ENCODE measurements at regions of chr2 and their contacts with region 1.

Region 1: DNA sequence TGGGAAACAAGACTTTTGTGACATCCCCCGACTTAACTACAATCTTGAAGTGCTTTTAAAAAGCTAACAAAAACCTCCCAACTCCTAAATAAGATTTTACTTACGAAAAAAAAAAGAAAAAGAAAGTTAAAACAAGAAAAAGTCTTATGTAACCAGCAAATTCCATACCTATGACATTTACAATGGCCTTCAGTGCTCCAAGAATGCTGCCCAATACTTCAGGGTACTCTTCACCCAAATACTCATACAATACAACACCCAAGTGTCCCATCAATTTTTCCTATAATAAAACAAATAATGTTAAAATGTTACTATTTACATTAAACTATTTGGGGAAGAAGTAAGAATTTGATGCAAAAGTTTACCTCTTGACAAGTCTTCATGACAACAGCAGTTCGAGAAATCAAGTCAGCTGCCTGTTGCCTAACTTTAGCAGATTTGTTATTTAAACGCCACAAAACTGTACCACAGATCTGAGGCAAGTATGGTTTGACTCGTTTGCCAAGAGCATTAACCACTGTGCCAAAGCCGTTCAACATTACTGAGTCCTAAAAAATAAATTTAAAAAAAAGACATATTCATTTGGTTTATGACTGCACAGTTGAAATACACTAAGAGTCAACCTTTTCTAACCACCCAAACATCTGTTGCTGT is 34.8 kb downstream of the SF3B1 start:
- DNase-seq: no peak
- H3K4me3 ChIP-seq: no peak overlapping the region
- H3K4me3 Mint-ChIP-seq: no peak overlapping the region
- H3K27ac ChIP-seq: no peak overlapping the region
- H3K27ac Mint-ChIP-seq: peak overlapping the region in 1 of 7 donors; percentile 16
- H3K4me1 ChIP-seq: no peaks in the 10 kb centered on the region
- H3K4me1 Mint-ChIP-seq: no peaks in the 10 kb centered on the region
- H3K27me3 ChIP-seq: no peaks in the 10 kb centered on the region
- H3K27me3 Mint-ChIP-seq: no peaks in the 10 kb centered on the region
- CTCF ChIP-seq: no peak

Region 2: DNA sequence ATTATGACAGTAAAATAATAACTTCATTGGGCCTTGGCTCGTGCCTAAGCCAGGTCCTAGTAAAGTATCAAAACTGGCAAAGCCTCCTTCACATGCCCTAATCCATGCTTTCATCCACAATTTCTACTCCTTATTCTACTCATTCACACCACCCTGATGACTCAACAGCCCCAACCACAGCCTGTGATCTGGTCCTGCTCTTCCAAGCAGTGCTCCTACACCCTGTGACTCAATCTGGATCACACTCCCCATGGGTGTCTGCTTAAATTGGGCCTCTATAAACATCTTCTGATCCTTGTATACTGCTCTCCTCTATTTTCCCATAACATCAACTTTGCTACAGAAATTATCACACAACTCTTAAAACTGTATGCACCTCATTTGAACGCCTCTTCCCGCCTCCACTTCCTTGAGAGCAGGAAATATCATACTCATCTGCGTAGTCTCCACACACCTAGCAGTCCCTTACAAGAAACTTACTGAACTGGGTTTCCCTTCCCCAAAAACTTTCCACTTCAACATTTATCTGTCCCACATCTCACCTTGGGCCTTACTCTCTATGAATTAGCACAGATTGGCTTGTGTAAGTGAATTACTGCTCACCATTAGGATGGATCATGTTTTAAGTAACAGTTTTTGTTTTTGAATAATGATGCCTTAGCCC is 616.5 kb before region 1 on chr2:
- intact Hi-C with region 1: loop called (anchors 10 kb)
- DNase-seq: no peak
- H3K4me3 ChIP-seq: no peak overlapping the region
- H3K4me3 Mint-ChIP-seq: no peak overlapping the region
- H3K27ac ChIP-seq: peak overlapping the region in 1 of 2 donors; percentile 39
- H3K27ac Mint-ChIP-seq: peak overlapping the region in 1 of 7 donors; percentile 21
- H3K4me1 ChIP-seq: no peaks in the 10 kb centered on the region
- H3K4me1 Mint-ChIP-seq: no peaks in the 10 kb centered on the region
- H3K27me3 ChIP-seq: no peaks in the 10 kb centered on the region
- H3K27me3 Mint-ChIP-seq: no peaks in the 10 kb centered on the region
- CTCF ChIP-seq: no peak

Measured in CD14-positive monocyte (primary cell).